ENCODE measurements at regions of chr14 and their contacts with region 1.

Region 1: DNA sequence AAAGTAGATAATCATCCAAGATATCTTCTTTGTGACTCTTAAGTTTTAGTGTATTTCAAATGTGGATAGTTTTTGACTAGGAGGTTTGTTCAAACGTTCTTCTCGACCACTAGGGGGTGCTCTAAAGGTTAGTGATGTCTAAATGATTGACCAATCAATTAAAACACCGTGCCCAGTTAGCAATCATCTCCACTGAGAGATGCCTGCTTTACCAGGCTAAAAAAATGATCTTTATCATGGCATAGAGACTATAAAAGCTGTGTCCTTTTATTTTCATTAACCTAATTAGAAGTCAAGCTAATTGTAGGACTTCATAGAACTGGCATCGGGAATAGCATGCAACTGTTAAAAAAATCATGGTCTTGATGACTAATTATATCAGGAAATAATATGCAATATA is 153.9 kb downstream of the PRKCH start:
- DNase-seq: no peak
- H3K4me3 Mint-ChIP-seq: no peak overlapping the region
- H3K27ac Mint-ChIP-seq: peak overlapping the region; percentile 81
- H3K4me1 Mint-ChIP-seq: peaks cover 89% of the 10 kb centered on the region
- H3K27me3 Mint-ChIP-seq: no peaks in the 10 kb centered on the region

Region 2: GRCh38 chr14:60922050-60922449 is 553.3 kb before region 1 on chr14:
- intact Hi-C with region 1: no loop called
- DNase-seq: no peak
- H3K4me3 Mint-ChIP-seq: no peak overlapping the region
- H3K27ac Mint-ChIP-seq: no peak overlapping the region
- H3K4me1 Mint-ChIP-seq: peaks cover 13% of the 10 kb centered on the region
- H3K27me3 Mint-ChIP-seq: no peaks in the 10 kb centered on the region

Region 3: GRCh38 chr14:61368114-61368726 is 107.1 kb before region 1 on chr14:
- intact Hi-C with region 1: no loop called
- DNase-seq: no peak
- H3K4me3 Mint-ChIP-seq: no peak overlapping the region
- H3K27ac Mint-ChIP-seq: peak overlapping the region; percentile 40
- H3K4me1 Mint-ChIP-seq: peaks cover 45% of the 10 kb centered on the region
- H3K27me3 Mint-ChIP-seq: no peaks in the 10 kb centered on the region

Region 4: DNA sequence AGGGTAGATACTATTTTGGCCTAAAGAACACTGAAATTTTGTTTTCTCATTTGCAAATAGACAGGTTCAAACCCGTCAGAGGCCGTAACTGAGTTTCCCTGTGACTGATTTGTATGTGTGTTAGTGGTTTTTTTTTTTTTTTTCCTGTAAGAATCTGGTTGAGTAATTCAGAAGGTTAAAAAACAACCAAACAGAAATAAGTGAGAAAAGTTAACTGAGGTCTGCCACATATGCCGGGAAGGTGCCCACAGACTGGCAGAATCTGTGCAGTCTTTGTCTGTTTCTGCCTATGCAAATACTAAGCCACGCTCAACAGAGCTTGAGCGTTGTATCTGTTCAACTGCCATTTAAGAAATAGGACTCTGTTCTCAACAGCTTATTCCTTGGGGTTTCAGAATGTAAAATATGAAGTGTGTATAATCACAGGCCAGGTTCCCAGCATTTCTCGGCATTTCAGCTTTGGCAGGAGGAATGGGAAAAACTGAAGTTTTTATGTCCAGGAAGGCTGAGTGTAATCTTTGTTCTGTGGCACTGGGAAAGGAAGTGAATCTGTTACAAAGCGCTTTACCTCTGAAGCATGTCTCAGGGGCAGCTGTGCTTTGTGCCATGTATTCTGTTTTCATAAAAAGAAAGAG is 28.0 kb after region 1 on chr14:
- intact Hi-C with region 1: loop called (anchors 1 kb)
- DNase-seq: peak; percentile 24
- H3K4me3 Mint-ChIP-seq: peak overlapping the region; percentile 76
- H3K27ac Mint-ChIP-seq: peak overlapping the region; percentile 95
- H3K4me1 Mint-ChIP-seq: peaks cover 72% of the 10 kb centered on the region
- H3K27me3 Mint-ChIP-seq: no peaks in the 10 kb centered on the region

Region 5: DNA sequence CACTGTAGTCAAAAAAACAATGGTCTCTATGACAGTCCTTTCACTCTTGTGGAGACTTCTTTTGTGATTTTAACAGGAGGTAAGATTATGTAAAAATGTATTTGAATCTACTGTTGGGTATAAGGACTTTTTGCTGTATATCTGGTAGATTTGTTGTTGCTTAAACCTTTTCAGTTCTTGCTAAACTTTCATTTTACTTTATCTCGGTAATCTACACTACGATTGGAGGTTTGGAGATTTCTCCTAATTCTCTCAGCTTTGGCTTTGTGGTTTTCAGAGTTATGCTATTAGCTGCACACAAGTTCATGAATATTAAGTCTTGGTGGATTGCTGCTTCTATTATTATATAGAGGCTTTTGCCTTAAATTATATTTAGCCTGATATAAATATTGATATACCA is 103.4 kb after region 1 on chr14:
- intact Hi-C with region 1: loop called (anchors 1 kb)
- DNase-seq: no peak
- H3K4me3 Mint-ChIP-seq: no peak overlapping the region
- H3K27ac Mint-ChIP-seq: no peak overlapping the region
- H3K4me1 Mint-ChIP-seq: peaks cover 37% of the 10 kb centered on the region
- H3K27me3 Mint-ChIP-seq: peaks cover 74% of the 10 kb centered on the region

Region 6: DNA sequence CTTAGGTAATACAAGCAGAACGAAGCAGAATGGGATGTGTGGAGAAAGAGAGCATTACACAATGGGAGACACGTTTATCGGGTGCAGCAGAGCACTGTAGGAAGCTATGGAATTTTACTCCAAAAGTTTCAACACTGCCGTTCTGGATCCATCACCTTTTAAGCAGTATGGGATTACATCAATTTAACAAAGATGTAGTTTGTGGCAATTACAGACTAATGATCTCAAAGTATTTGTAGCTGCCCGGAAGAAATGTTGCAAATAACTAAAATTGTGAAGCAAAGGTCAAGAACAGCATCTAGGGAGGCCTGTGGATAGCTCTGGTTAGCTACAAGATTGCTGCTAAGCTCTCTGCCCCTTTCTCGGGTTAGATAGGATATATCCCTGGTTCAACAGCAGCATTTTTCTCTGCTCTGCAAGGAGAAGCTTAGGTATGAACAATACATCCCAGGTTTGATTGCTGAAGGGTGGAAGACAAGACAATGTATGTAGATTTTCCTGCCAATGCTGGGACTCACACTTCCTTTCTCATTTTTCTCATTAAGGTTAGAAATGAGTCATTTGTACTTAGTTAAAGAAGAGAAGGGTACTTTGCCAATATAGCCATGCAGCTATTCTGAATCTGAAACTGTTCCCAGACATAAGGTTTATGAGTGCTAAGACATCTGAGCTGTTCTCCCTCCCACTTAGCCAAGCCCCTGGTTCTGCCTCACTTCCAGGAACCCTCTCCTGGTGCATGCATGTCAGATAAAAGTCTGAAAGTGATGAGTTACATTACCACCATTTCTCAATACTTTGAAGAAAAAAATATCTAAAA is 145.0 kb after region 1 on chr14:
- intact Hi-C with region 1: loop called (anchors 1 kb)
- DNase-seq: no peak
- H3K4me3 Mint-ChIP-seq: no peak overlapping the region
- H3K27ac Mint-ChIP-seq: no peak overlapping the region
- H3K4me1 Mint-ChIP-seq: peaks cover 51% of the 10 kb centered on the region
- H3K27me3 Mint-ChIP-seq: no peaks in the 10 kb centered on the region

Region 7: DNA sequence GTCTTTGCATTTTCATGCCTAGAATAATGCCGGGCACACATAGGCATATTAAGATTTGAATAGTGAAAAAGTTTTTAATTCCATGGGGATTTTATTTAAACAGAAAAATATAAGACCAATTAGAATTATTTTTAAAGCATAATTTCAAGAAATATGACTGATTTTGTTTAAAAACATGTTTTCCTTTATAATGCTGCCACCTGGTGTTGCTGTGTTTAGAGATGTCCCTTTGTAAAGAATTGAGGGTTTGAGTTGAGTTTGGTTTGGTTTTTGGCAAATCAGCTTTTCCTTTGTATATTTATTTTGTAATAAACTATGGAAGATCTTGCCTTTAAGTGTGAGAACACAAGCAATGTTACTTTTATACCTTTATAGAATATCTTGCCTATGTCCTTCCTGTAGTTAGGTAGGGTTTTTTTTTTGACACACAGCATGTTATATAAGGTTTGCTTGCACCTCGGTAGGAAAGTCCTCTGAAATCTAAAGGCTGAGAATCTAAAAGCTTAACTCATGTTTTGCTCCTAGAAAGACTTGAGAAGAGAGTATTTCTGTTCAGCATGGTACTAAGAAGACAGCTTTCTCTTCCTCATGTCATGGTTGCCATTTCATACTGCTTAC is 255.5 kb after region 1 on chr14:
- intact Hi-C with region 1: loop called (anchors 5 kb)
- DNase-seq: no peak
- H3K4me3 Mint-ChIP-seq: no peak overlapping the region
- H3K27ac Mint-ChIP-seq: peak overlapping the region; percentile 24
- H3K4me1 Mint-ChIP-seq: peaks cover 58% of the 10 kb centered on the region
- H3K27me3 Mint-ChIP-seq: no peaks in the 10 kb centered on the region

Region 8: DNA sequence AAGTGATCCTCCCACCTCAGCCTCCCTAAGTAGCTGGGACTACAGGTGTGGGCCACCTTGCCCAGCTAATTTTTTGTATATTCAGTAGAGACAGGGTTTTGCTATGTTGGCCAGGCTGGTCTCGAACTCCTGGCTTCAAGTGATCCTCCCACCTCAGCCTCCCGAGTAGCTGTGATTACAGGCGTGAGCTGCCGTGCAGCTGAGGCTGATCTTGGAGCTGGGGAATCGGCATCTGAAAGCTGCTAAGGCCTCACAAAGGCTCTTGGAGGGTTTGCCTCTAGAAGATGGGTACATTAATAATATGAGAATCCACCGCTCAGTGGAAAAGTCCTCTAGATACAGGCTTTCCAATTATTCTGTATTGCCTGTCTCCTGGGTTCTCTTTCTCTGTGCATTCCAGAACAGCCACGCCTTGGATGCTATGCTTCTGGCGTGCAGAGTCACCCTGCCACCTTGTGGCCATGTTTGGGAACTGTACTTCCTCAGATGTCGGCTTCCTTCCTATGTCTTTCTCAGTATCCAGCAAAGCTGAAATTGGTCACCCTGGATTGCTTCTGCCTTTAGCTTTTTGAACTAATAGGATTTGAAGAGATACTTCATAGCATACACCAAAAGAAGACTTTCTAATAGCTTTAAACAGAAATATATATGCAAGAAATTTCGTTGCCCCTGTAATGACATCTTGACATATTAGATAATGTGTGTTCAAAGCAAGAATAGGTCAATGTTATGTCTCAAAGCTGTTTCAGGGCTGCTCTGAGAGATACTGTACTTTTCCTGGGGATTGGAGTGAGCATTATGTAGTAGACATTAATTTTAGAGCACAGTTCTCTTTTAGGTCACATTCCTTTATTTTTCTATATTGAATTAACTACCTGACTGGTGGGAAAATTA is 362.3 kb after region 1 on chr14:
- intact Hi-C with region 1: no loop called
- DNase-seq: peak; percentile 59
- H3K4me3 Mint-ChIP-seq: no peak overlapping the region
- H3K27ac Mint-ChIP-seq: no peak overlapping the region
- H3K4me1 Mint-ChIP-seq: peaks cover 13% of the 10 kb centered on the region
- H3K27me3 Mint-ChIP-seq: peaks cover 21% of the 10 kb centered on the region